ENCODE measurements at regions of chr2 and their contacts with region 1.

Region 1: DNA sequence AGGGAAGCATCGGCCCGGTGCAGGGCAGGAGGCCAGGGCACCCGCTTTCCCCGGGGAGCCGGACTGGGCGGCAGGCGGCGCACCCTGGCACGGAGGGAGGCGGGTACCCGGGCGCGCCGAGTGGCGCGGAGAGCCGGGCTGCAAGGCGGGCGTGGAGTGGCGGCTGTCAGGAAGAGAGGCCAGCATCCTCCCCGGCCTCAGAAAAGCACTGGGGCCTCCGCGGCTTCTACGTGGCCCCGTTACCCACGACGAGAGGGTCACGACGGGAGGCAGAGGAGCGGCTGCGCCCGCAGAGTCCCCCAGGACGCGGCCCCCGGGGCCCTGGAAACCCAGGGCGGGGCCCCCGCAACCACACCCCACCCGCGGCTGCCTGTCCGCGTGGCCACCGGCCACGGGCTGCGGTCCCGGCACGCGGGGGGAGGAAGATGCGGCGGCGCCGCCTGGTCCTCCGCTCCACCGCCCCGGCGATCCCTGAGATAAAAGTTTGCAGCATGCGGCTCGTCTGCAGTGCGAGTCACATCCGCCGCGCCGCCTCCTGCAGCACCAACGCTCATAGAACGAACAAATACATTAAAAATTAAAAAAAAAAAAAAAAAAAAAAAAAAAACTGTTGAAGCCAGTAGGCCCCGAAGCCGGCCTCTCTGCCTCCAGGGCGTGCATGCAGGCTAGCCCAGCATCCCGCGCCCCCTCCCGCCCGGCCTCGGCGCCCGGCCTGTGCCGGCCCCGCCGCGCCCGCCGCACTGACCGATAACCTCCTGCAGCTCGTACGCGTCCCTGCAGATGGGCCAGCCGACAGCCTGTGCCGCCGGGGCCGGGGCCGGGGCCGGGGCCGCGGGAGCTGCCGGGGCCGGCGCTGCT is 683 bp downstream of the STK39 start:
- DNase-seq: peak; percentile 11 to 82
- H3K4me3 ChIP-seq: peak overlapping the region; percentile 75 to 98
- H3K27ac ChIP-seq: peak overlapping the region; percentile 82 to 84
- H3K4me1 ChIP-seq: peaks cover 0 to 10% of the 10 kb centered on the region in 2 donors
- H3K27me3 ChIP-seq: no peaks in the 10 kb centered on the region
- CTCF ChIP-seq: peak in 2 of 3 experiments; percentile 47 to 55

Region 2: GRCh38 chr2:168160897-168161296 is 85.8 kb before region 1 on chr2:
- intact Hi-C with region 1: loop called (anchors 10 kb)
- DNase-seq: no peak
- H3K4me3 ChIP-seq: no peak overlapping the region
- H3K27ac ChIP-seq: no peak overlapping the region
- H3K4me1 ChIP-seq: peaks cover 0 to 9% of the 10 kb centered on the region in 2 donors
- H3K27me3 ChIP-seq: no peaks in the 10 kb centered on the region
- CTCF ChIP-seq: no peak

Region 3: DNA sequence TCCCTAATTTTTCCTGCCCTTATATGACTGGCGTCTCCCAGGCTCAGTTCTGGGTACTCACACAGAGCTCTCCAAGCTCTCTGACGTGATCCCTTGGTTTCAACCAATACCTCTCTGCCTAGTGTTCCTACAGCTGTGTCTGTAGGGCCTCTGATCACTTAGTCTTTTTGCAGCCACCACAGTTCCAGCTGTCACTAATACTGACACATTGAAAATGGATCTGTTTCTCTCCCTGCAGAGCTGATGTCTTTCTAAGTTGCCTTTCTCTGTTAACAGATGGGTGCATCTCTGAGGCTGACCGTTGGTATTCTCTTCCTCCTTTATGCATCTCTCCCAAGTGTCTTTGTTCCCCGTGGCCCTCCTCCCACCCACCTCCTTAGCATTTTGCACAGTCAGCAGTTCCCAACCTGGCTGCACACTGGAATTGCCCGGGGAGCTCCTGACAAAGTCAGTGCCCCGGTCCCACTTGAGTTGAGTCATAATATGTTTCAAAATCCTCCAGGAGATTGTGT is 271.9 kb after region 1 on chr2:
- intact Hi-C with region 1: loop called (anchors 5 kb)
- DNase-seq: no peak
- H3K4me3 ChIP-seq: peak overlapping the region in 1 of 2 donors; percentile 13
- H3K27ac ChIP-seq: peak overlapping the region; percentile 35 to 47
- H3K4me1 ChIP-seq: peaks cover 0 to 12% of the 10 kb centered on the region in 2 donors
- H3K27me3 ChIP-seq: no peaks in the 10 kb centered on the region
- CTCF ChIP-seq: no peak

Measured in ascending aorta (tissue), 2 donors.